Breast epithelium (tissue), 4 donors: ENCODE measurements at regions of chr6 and their contacts with region 1.

Region 1: DNA sequence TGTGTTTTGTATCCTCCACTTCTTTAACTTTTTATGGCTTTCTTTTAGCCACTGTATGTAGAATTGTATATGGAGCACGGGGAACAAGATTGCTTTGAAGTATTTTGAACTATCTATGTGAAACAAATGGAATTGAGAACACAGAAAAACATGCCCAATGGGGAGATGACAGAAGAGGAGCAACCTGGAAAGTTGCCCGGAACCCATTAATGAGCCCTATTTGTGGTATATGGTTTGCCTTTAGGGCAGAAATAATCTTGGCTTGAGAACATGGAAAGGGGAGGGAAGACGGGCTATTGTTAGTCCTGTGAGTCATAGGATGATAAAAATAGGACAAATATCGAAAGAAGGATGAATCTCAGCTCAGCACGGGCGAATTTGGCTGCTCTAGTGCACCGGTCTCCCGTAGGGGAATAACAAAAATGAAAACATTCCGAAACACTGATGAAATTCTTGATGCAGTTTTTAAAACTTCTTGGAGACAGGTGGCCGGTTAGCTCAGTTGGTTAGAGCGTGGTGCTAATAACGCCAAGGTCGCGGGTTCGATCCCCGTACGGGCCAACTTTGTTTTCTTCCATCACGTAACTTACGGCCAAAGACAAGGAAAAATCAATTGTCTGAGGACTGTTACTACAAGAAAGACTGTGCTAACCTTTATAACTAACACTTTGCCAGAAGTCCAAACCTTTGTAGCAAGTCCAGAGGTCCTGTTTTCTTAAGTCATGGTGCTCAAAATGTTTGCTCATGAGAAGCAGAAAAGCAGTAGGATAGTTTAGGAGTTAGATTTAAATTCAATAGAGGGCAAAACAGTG is 15.7 kb downstream of the HMGN4 start:
- DNase-seq: peak in 1 of 2 donors; percentile 71
- H3K4me3 ChIP-seq: peak overlapping the region; percentile 34 to 70 (median 64)
- H3K27ac ChIP-seq: peak overlapping the region; percentile 81 to 92
- H3K4me1 ChIP-seq: no peaks in the 10 kb centered on the region
- H3K27me3 ChIP-seq: no peaks in the 10 kb centered on the region
- CTCF ChIP-seq: peak in 1 of 3 donors; percentile 4
- POLR2A ChIP-seq: no peak

Region 2: DNA sequence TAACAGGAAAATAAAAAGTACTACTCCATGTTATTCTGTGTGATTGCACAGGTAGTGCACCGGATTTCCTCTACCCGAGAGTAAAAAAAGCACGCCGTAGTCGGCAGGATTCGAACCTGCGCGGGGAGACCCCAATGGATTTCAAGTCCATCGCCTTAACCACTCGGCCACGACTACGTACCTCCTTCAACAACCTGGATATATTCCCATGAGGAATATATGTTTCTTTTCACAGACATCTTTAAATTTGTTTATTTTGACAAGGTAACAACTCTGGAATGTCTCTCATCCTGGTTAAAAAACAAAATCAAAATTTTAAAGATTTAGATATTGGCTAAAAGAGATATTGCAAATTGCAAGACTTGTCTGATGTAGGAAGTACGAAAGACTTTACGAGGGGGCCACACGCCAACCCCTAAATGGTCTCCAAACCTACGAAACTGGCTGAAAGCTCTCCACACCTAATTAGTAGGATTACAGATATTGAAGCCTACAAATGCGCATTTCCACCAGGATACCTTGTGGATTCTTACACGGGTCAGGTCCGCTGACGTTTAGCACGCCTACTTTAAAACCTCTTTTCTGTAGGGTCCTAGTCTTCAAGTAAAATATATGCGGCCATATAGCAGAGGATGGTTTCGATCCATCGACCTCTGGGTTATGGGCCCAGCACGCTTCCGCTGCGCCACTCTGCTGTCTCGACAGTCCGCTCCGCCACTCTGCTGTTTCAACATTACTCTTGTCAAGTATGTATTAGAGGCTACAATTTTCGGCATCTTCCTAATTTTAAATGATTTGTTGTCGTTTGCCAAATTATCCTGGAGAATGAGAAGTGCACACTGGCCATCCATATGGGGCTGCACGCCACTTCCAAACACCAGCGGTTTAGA is 241.1 kb before region 1 on chr6:
- intact Hi-C with region 1: loop called (anchors 10 kb)
- DNase-seq: peak; percentile 80 to 87
- H3K4me3 ChIP-seq: peak overlapping the region; percentile 32 to 68 (median 57)
- H3K27ac ChIP-seq: peak overlapping the region; percentile 73 to 85
- H3K4me1 ChIP-seq: no peaks in the 10 kb centered on the region
- H3K27me3 ChIP-seq: peaks cover 0 to 6% of the 10 kb centered on the region in 2 donors
- CTCF ChIP-seq: no peak
- POLR2A ChIP-seq: no peak

Region 3: GRCh38 chr6:26401987-26402658 is 151.7 kb before region 1 on chr6 and contains the start of gene BTN3A1:
- intact Hi-C with region 1: no loop called
- DNase-seq: peak in 1 of 2 donors; percentile 50
- H3K4me3 ChIP-seq: peak within 1 kb of the TSS; percentile 56 to 65 (median 61)
- H3K27ac ChIP-seq: peak within 1 kb of the TSS; percentile 74 to 89
- H3K4me1 ChIP-seq: peaks cover 0 to 7% of the 10 kb centered on the region in 2 donors
- H3K27me3 ChIP-seq: no peaks in the 10 kb centered on the region
- CTCF ChIP-seq: no peak
- POLR2A ChIP-seq: no peak
- total RNA-seq, gene BTN3A1: 9.1 to 23.4 (median 12.8) TPM

Region 4: GRCh38 chr6:26537846-26538571 is 15.8 kb before region 1 on chr6 and contains the start of gene HMGN4:
- intact Hi-C with region 1: loop called (anchors 2 kb)
- DNase-seq: peak; percentile 71 to 79
- H3K4me3 ChIP-seq: peak within 1 kb of the TSS; percentile 81 to 91 (median 85)
- H3K27ac ChIP-seq: peak within 1 kb of the TSS; percentile 94 to 96
- H3K4me1 ChIP-seq: no peaks in the 10 kb centered on the region
- H3K27me3 ChIP-seq: no peaks in the 10 kb centered on the region
- CTCF ChIP-seq: no peak
- POLR2A ChIP-seq: peak; percentile 39
- total RNA-seq, gene HMGN4: 57.0 to 96.6 (median 82.6) TPM